Activated B cell treated with CpG ODN at 0.5 μM for 24 hours (primary cell): ENCODE measurements at regions of chr3 and their contacts with region 1.

Region 1: GRCh38 chr3:108489771-108490170 is 20.6 kb downstream of the MYH15 start:
- DNase-seq: no peak
- ATAC-seq: peak; percentile 72
- H3K4me3 Mint-ChIP-seq: no peak overlapping the region
- H3K27ac Mint-ChIP-seq: no peak overlapping the region
- H3K4me1 Mint-ChIP-seq: no peaks in the 10 kb centered on the region
- H3K27me3 Mint-ChIP-seq: peaks cover 5% of the 10 kb centered on the region
- CTCF ChIP-seq: peak; percentile 29

Region 2: DNA sequence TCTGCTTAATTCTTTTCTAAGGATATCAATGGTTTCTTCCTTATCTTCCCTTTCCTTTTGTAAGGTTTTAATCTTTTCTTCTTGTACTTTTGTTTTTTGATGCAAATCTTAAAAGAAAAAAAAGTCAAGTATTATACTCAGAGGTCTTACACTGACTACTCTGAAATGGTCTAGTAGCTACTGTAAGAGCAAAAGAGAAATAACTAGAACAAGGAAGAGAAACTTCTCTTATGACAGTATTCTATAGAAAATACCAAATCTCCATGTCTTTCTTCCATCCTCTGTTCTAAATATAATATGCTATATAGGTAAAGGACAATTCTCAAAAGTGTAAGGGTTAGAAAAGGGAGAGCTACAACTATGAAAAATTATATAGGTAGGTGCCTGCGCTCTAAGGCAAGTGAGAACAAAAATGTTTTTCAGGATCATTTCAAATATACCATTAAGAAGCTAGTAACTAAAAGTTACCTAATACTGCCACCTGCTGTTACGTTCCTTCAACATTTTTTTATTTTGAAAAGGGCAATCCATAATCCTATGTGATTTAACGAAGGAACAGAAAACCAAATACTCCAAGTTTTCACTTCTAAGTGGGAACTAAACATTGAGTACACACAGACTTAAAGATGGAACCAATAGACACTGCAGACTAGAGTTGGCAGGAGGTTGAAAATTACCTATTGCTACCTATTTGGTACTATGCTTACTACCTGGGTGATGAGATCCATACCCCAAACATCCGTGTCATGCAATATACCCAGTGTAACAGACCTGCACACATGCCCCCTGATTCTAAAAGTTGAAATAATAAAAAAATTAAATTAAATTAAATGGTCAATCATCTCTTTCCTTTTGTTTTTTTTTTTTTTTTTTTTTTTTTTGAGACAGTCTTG is 62.7 kb after region 1 on chr3:
- CTCF ChIA-PET with region 1: interaction called, 105 read pairs
- POLR2A ChIA-PET with region 1: interaction called, 3 read pairs
- intact Hi-C with region 1: loop called (anchors 1 kb)
- DNase-seq: no peak
- ATAC-seq: peak; percentile 34
- H3K4me3 Mint-ChIP-seq: peak overlapping the region; percentile 26
- H3K27ac Mint-ChIP-seq: peak overlapping the region; percentile 77
- H3K4me1 Mint-ChIP-seq: peaks cover 8% of the 10 kb centered on the region
- H3K27me3 Mint-ChIP-seq: no peaks in the 10 kb centered on the region
- CTCF ChIP-seq: no peak

Region 3: GRCh38 chr3:108818404-108818803 is 328.6 kb after region 1 on chr3:
- CTCF ChIA-PET with region 1: no interaction called
- POLR2A ChIA-PET with region 1: no interaction called
- intact Hi-C with region 1: loop called (anchors 1 kb)
- DNase-seq: no peak
- ATAC-seq: no peak
- H3K4me3 Mint-ChIP-seq: no peak overlapping the region
- H3K27ac Mint-ChIP-seq: no peak overlapping the region
- H3K4me1 Mint-ChIP-seq: no peaks in the 10 kb centered on the region
- H3K27me3 Mint-ChIP-seq: peaks cover 6% of the 10 kb centered on the region
- CTCF ChIP-seq: no peak

Region 4: DNA sequence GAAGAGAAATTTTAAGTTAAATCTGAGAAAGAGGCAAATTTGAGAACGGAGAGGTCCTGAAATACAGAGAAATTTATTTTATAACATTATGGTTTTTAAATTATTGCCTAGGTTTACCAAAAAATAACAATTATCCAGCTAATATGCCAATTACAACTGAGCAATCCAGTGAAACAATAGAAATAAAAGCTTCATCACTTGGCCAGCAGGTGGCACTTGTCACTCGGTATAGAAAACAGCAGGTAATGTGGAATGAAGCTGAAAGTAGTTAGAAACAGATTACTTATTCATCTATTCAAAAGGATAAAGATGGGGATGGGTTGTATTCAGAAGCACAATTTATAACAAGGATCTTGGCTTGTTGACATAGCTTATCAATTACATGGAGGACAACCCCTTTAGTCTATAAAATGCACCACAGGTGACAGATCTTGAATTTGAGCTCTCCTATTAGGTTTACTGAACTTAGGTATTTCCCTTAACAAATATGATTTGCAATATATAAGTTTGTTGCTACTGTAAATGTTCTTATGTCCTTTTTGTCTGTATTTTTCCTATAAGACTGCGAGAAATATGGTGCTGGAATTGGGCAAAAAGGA is 534.0 kb after region 1 on chr3:
- CTCF ChIA-PET with region 1: no interaction called
- POLR2A ChIA-PET with region 1: no interaction called
- intact Hi-C with region 1: loop called (anchors 1 kb)
- DNase-seq: no peak
- ATAC-seq: peak; percentile 57
- H3K4me3 Mint-ChIP-seq: no peak overlapping the region
- H3K27ac Mint-ChIP-seq: no peak overlapping the region
- H3K4me1 Mint-ChIP-seq: no peaks in the 10 kb centered on the region
- H3K27me3 Mint-ChIP-seq: peaks cover 3% of the 10 kb centered on the region
- CTCF ChIP-seq: no peak

Region 5: GRCh38 chr3:109224333-109224732 is 734.6 kb after region 1 on chr3:
- CTCF ChIA-PET with region 1: no interaction called
- POLR2A ChIA-PET with region 1: no interaction called
- intact Hi-C with region 1: loop called (anchors 10 kb)
- DNase-seq: no peak
- ATAC-seq: no peak
- H3K4me3 Mint-ChIP-seq: no peak overlapping the region
- H3K27ac Mint-ChIP-seq: no peak overlapping the region
- H3K4me1 Mint-ChIP-seq: no peaks in the 10 kb centered on the region
- H3K27me3 Mint-ChIP-seq: no peaks in the 10 kb centered on the region
- CTCF ChIP-seq: no peak